ENCODE measurements at regions of chr21 and their contacts with region 1.

Region 1: GRCh38 chr21:17819114-17819876 is at the start of gene C21orf91:
- DNase-seq: peak; percentile 91 to 95 (median 94)
- ATAC-seq: peak; percentile 97 to 99 (median 98)
- H3K4me3 ChIP-seq: peak within 1 kb of the TSS; percentile 76 to 99 (median 94)
- H3K27ac ChIP-seq: peak within 1 kb of the TSS; percentile 85 to 96 (median 90)
- H3K4me1 ChIP-seq: peaks cover 0 to 45% (median 20%) of the 10 kb centered on the region in 12 donors
- H3K27me3 ChIP-seq: no peaks in the 10 kb centered on the region
- CTCF ChIP-seq: no peak
- POLR2A ChIP-seq: peak; percentile 62 to 93
- total RNA-seq, gene C21orf91: 5.1 to 21.2 (median 14.4) TPM

Region 2: GRCh38 chr21:17611414-17612022 is 207.8 kb before region 1 on chr21:
- intact Hi-C with region 1: loop called in 3 of 10 experiments (anchors 2 to 10 kb)
- DNase-seq: peak; percentile 72 to 85 (median 80)
- ATAC-seq: peak; percentile 55 to 87 (median 70)
- H3K4me3 ChIP-seq: peak overlapping the region; percentile 50 to 88 (median 79)
- H3K27ac ChIP-seq: peak overlapping the region in 11 of 12 donors; percentile 72 to 91 (median 83)
- H3K4me1 ChIP-seq: peaks cover 0 to 13% (median 6%) of the 10 kb centered on the region in 12 donors
- H3K27me3 ChIP-seq: no peaks in the 10 kb centered on the region
- CTCF ChIP-seq: no peak
- POLR2A ChIP-seq: no peak

Region 3: DNA sequence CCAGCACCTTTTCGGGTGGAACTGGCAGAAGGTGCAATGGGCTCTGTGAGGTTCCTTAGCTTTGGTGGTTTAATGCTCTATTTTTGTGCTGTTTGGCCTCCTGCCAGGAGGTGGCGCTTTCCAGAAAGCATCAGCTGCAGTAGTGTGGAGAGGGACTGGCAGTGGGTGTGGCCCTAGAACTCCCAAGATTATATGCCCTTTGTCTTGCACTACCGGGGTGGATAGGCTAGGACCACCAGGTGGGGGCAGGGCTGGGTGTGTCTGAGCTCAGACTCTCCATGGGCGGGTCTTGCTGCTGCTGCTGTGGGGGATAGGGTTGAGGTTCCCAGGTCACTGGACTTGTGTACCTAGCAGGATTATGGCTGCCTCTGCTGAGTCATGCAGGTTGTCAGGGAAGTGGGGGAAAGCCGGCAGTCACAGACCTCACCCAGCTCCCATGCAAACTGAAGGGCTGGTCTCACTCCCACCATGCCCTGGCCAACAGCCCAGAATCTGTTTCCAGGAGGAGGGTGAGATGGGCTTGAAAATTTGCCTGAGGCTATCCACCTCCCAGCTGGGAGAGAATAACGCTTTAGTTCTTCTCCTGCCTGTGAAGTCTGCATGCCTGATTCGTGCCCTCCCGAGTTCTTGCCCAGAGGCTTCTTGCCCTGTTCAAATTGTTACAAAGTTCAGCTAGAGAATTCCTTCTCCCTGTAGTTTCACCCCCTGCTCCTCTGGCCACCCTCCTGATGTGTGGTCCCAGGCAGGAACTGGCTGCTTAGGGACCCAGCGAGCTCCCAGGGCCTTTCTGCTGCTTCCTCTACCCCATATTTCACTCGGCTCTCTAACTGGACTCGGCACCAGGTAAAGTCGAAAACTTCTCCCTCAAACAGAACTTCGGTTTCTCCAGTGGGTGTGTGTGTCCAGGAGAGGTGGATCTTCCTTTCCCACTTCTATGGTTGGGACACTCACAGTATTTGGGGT is 130.1 kb before region 1 on chr21:
- intact Hi-C with region 1: loop called in 3 of 10 experiments (anchors 10 kb)
- DNase-seq: peak; percentile 33 to 61 (median 44)
- ATAC-seq: peak in 2 of 4 donors; percentile 45 to 52
- H3K4me3 ChIP-seq: no peak overlapping the region
- H3K27ac ChIP-seq: no peak overlapping the region
- H3K4me1 ChIP-seq: peaks cover 0 to 20% (median 8%) of the 10 kb centered on the region in 12 donors
- H3K27me3 ChIP-seq: no peaks in the 10 kb centered on the region
- CTCF ChIP-seq: peak in 6 of 12 donors; percentile 17 to 33 (median 24)
- POLR2A ChIP-seq: no peak

Region 4: DNA sequence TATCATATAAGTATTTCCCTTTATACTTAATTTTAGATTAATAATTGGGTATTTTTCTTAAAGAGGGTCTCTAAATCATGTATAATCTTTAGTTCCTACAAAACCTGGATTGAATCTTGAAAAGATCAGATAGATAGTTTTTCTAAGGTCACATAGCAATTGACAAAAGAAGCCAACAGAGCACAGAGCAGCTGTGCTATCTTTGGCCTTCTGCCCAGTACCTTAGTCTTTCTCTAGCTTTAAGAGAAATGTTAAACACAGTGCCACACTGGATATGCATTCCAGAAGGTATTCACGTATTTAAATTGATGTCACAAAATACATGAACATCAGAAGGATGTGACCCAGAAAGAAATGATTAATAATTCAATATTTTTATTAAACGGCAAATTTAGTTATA is 87.0 kb before region 1 on chr21:
- intact Hi-C with region 1: loop called in 1 of 10 experiments (anchors 10 kb)
- DNase-seq: no peak
- ATAC-seq: no peak
- H3K4me3 ChIP-seq: no peak overlapping the region
- H3K27ac ChIP-seq: no peak overlapping the region
- H3K4me1 ChIP-seq: peaks cover 0 to 10% (median 0%) of the 10 kb centered on the region in 12 donors
- H3K27me3 ChIP-seq: no peaks in the 10 kb centered on the region
- CTCF ChIP-seq: no peak
- POLR2A ChIP-seq: no peak

Region 5: GRCh38 chr21:17775431-17776126 is 43.7 kb before region 1 on chr21:
- intact Hi-C with region 1: no loop called
- DNase-seq: no peak
- ATAC-seq: no peak
- H3K4me3 ChIP-seq: peak overlapping the region in 1 of 12 donors; percentile 3
- H3K27ac ChIP-seq: peak overlapping the region in 1 of 12 donors; percentile 60
- H3K4me1 ChIP-seq: peaks cover 0 to 34% (median 0%) of the 10 kb centered on the region in 12 donors
- H3K27me3 ChIP-seq: no peaks in the 10 kb centered on the region
- CTCF ChIP-seq: no peak
- POLR2A ChIP-seq: no peak

Region 6: GRCh38 chr21:17793246-17794123 is 25.8 kb before region 1 on chr21:
- intact Hi-C with region 1: loop called in 2 of 10 experiments (anchors 2 kb)
- DNase-seq: no peak
- ATAC-seq: peak in 3 of 4 donors; percentile 39 to 59 (median 50)
- H3K4me3 ChIP-seq: peak overlapping the region in 10 of 12 donors; percentile 23 to 58 (median 40)
- H3K27ac ChIP-seq: peak overlapping the region in 11 of 12 donors; percentile 8 to 85 (median 31)
- H3K4me1 ChIP-seq: peaks cover 0 to 53% (median 11%) of the 10 kb centered on the region in 12 donors
- H3K27me3 ChIP-seq: no peaks in the 10 kb centered on the region
- CTCF ChIP-seq: no peak
- POLR2A ChIP-seq: no peak

Region 7: DNA sequence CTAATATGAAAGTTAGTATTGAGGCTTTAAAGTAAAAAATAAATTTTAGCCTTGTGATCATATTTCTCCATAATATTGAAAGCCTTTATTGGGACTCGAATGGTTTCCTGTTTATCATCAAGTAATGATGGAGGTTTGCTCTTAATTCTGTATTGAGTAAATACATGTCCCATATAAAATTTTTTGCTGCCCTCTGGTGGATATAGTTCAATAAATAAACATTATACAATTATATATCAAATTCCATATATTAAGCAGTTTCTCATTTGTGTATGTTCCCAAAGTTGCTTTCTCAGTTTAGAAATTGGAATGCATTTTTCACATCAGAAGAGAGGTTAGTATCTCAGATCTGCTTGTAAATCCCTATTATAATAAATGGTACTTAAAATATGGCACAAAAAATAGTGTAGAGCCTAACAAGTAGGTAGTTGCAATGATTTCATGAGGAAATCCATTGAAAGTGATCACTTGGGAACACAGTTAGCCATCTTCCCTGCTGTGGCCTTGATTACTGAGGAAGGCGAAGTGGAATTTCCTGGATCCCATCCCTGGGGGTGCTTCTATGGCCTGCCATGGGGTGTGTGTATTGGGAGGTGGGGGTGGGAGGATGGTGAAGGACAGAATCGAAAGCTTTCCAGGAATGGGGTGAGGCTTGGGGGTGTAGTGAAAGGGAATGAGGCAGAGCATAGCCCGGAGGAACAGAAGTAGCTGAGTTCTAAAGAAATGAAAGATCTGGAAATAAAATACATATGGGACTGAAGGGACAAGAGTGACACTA is 83.9 kb after region 1 on chr21:
- intact Hi-C with region 1: loop called in 7 of 10 experiments (anchors 2 to 10 kb)
- DNase-seq: no peak
- ATAC-seq: no peak
- H3K4me3 ChIP-seq: no peak overlapping the region
- H3K27ac ChIP-seq: no peak overlapping the region
- H3K4me1 ChIP-seq: peaks cover 0 to 19% (median 13%) of the 10 kb centered on the region in 12 donors
- H3K27me3 ChIP-seq: no peaks in the 10 kb centered on the region
- CTCF ChIP-seq: peak in 10 of 12 donors; percentile 21 to 55 (median 42)
- POLR2A ChIP-seq: no peak

Region 8: DNA sequence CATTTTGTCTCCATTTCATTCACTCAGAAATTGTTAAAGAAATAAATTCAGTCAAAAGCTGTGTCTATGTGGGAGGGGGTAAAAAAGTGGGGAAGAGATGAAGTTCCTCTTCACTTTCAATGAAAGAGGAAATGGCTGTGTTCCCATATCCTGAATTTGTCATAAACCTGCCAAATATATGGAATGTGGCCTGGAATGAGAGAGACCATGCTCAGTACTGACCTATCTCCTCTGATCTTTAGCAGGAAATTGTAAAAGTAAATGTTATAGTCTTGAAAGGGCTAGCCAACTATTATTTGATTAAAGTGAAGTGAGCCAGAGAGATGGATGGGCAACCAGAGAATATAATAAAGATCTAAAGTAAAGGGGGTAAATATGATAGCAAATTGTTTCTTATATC is 130.1 kb after region 1 on chr21:
- intact Hi-C with region 1: no loop called
- DNase-seq: no peak
- ATAC-seq: no peak
- H3K4me3 ChIP-seq: no peak overlapping the region
- H3K27ac ChIP-seq: peak overlapping the region in 3 of 12 donors; percentile 10 to 26 (median 23)
- H3K4me1 ChIP-seq: peaks cover 0 to 22% (median 4%) of the 10 kb centered on the region in 12 donors
- H3K27me3 ChIP-seq: no peaks in the 10 kb centered on the region
- CTCF ChIP-seq: no peak
- POLR2A ChIP-seq: no peak